B cell (primary cell): ENCODE measurements at regions of chr4 and their contacts with region 1.

Region 1: DNA sequence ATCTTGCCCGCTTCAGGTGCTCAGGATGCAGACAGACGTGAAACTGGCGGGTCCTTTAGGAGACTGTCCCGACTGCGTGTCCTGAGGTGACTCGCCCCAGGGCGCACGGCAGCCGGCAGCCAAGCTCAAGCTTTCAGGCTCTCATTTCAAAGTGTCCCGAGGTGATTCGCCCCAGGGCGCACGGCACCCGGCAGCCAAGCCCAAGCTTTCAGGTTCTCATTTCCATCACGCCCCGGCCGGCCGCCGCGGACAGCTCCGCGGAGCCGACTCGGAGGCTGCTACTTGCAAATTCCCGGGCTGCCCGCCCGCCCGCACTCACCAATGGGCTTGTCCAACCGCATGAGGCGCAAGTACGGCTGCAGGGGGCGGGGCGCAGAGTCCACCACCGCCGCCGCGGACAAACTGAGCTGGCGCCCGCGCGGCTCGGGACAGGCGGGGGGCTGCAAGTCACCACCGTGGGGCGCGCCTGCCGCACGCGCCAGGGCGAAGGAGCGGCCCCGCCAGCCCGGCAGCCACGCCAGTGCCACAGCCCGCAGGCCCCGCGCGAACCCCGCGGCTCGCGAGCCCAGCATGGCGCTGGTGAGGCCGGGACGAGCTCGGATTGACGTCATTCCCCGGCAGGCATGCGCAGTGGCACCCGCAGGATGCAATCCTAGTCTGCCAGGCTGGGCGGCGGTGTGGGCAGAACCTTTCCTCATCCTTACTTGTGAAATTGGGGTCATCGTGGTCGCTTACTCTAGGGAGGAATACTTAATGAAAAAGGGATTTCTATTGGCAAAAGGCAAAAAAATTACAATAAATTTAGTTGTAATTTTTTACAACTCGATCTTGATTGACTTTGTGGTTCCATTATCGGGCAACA is at the start of gene COQ2:
- DNase-seq: peak; percentile 96
- ATAC-seq: peak; percentile 85
- H3K4me3 ChIP-seq: peak within 1 kb of the TSS; percentile 60 to 98 (median 77)
- H3K4me3 Mint-ChIP-seq: peak within 1 kb of the TSS; percentile 99
- H3K27ac ChIP-seq: peak within 1 kb of the TSS; percentile 76 to 95
- H3K27ac Mint-ChIP-seq: peak within 1 kb of the TSS; percentile 99
- H3K4me1 ChIP-seq: peaks cover 18 to 19% of the 10 kb centered on the region in 2 donors
- H3K4me1 Mint-ChIP-seq: peaks cover 38% of the 10 kb centered on the region
- H3K27me3 ChIP-seq: no peaks in the 10 kb centered on the region
- H3K27me3 Mint-ChIP-seq: no peaks in the 10 kb centered on the region
- CTCF ChIP-seq: peak; percentile 34
- total RNA-seq, gene COQ2: 27.9 and 29.4 TPM in 2 replicates

Region 2: DNA sequence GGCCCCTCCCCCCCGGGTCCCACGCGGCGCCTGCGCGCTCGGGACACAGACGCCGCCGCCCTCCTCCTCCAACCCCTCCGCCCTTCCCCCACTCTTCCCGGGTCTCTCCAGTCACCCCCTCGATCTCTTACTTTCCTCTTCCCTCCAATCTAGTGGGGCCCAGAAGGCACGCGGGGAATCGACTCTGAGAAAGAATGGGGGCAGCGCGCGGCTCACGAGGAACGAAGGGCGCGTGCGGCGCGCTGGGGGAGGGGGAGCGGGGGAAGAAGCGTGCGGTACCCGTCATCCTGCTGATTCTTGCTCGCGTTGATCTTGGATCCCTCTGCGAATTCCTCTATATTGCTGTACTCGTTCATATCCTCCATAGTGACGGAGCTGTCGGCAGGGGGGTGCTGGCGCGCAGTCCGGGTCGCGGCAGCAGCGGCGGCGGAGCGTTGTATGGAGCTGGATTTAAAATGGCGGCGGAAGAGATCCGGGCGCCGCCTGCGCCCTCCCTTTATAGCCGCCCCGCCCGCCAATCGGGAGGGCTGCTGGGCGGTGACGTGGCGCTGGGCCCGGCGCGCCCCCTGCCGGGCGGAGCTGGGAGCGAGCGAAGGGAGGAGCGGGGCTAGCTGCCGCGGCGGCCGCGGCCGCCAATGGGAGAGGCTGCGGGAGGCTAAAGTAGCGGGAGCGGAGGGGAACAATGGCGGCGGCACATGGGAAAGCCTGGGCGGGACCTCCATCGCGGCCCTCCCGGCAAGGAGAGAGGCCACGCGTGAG is 855.3 kb before region 1 on chr4:
- CTCF ChIA-PET with region 1: no interaction called
- POLR2A ChIA-PET with region 1: no interaction called
- intact Hi-C with region 1: loop called (anchors 1 kb)
- DNase-seq: peak; percentile 97
- ATAC-seq: peak; percentile 64
- H3K4me3 ChIP-seq: peak overlapping the region; percentile 98 to 99 (median 98)
- H3K4me3 Mint-ChIP-seq: peak overlapping the region; percentile 100
- H3K27ac ChIP-seq: peak overlapping the region; percentile 96 to 100
- H3K27ac Mint-ChIP-seq: peak overlapping the region; percentile 100
- H3K4me1 ChIP-seq: peaks cover 27 to 32% of the 10 kb centered on the region in 2 donors
- H3K4me1 Mint-ChIP-seq: peaks cover 48% of the 10 kb centered on the region
- H3K27me3 ChIP-seq: no peaks in the 10 kb centered on the region
- H3K27me3 Mint-ChIP-seq: no peaks in the 10 kb centered on the region
- CTCF ChIP-seq: peak; percentile 97

Region 3: DNA sequence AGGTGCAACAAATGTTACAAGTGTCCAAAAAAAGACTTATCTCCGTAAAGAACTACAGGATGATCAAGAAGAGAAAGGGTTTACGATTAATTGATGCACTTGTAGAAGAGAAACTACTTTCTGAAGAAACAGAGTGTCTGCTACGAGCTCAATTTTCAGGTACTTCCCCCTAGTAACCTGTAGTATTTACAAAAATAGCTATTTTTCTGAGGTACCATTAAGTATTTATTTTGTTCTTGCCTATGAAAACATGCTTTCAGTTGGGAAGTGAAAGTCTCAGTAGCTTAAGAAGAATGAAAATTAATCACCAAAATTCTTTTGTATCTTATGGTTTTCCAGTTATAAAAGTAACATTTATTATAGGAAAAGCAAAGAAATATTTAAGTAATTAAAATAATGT is 378.0 kb before region 1 on chr4:
- CTCF ChIA-PET with region 1: no interaction called
- POLR2A ChIA-PET with region 1: no interaction called
- intact Hi-C with region 1: no loop called
- DNase-seq: no peak
- ATAC-seq: no peak
- H3K4me3 ChIP-seq: no peak overlapping the region
- H3K4me3 Mint-ChIP-seq: no peak overlapping the region
- H3K27ac ChIP-seq: no peak overlapping the region
- H3K27ac Mint-ChIP-seq: no peak overlapping the region
- H3K4me1 ChIP-seq: peaks cover 3% of the 10 kb centered on the region in 2 donors
- H3K4me1 Mint-ChIP-seq: peaks cover 7% of the 10 kb centered on the region
- H3K27me3 ChIP-seq: no peaks in the 10 kb centered on the region
- H3K27me3 Mint-ChIP-seq: no peaks in the 10 kb centered on the region
- CTCF ChIP-seq: no peak

Region 4: GRCh38 chr4:83012687-83013419 is 271.6 kb before region 1 on chr4:
- CTCF ChIA-PET with region 1: interaction called, 8 read pairs
- POLR2A ChIA-PET with region 1: interaction called, 3 read pairs
- intact Hi-C with region 1: loop called (anchors 1 kb)
- DNase-seq: peak; percentile 99
- ATAC-seq: peak; percentile 89
- H3K4me3 ChIP-seq: peak overlapping the region; percentile 56 to 87 (median 79)
- H3K4me3 Mint-ChIP-seq: peak overlapping the region; percentile 92
- H3K27ac ChIP-seq: peak overlapping the region; percentile 37 to 72
- H3K27ac Mint-ChIP-seq: peak overlapping the region; percentile 91
- H3K4me1 ChIP-seq: peaks cover 24 to 33% of the 10 kb centered on the region in 2 donors
- H3K4me1 Mint-ChIP-seq: peaks cover 43% of the 10 kb centered on the region
- H3K27me3 ChIP-seq: no peaks in the 10 kb centered on the region
- H3K27me3 Mint-ChIP-seq: no peaks in the 10 kb centered on the region
- CTCF ChIP-seq: peak; percentile 59

Region 5: DNA sequence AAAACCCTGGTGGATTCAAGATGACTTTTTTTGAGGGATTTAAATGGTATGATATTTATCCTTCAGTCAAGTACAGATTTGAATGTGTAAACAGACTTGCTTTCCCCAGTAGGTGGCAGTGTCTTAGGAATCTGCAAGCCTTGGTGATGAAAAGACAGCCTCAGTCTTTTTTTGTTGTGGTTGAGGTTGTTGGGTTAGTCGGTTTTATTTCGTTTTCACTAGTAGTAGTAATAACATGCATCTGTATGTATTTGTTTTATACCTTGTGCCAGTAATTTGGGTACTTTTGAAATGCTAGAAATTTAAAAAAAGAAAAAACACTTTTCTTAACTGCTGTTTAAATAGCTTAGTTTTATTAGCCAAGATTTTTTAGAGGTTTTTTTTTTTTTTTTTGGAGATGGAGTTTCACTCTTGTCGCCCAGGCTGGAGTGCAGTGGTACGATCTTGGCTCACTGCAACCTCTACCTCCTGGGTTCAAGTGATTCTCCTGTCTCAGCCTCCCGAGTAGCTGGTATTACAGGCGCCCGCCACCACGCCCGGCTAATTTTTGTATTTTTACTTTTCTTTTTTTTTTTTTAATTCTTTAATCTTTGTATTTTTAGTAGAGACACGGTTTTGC is 210.2 kb before region 1 on chr4:
- CTCF ChIA-PET with region 1: interaction called, 139 read pairs
- POLR2A ChIA-PET with region 1: interaction called, 9 read pairs
- intact Hi-C with region 1: loop called (anchors 1 kb)
- DNase-seq: peak; percentile 85
- ATAC-seq: peak; percentile 85
- H3K4me3 ChIP-seq: no peak overlapping the region
- H3K4me3 Mint-ChIP-seq: peak overlapping the region; percentile 71
- H3K27ac ChIP-seq: no peak overlapping the region
- H3K27ac Mint-ChIP-seq: peak overlapping the region; percentile 57
- H3K4me1 ChIP-seq: peaks cover 16 to 19% of the 10 kb centered on the region in 2 donors
- H3K4me1 Mint-ChIP-seq: peaks cover 20% of the 10 kb centered on the region
- H3K27me3 ChIP-seq: no peaks in the 10 kb centered on the region
- H3K27me3 Mint-ChIP-seq: no peaks in the 10 kb centered on the region
- CTCF ChIP-seq: peak; percentile 78

Region 6: GRCh38 chr4:83217721-83218522 is 66.5 kb before region 1 on chr4:
- CTCF ChIA-PET with region 1: interaction called, 4 read pairs
- POLR2A ChIA-PET with region 1: no interaction called
- intact Hi-C with region 1: loop called (anchors 1 kb)
- DNase-seq: peak; percentile 95
- ATAC-seq: peak; percentile 90
- H3K4me3 ChIP-seq: peak overlapping the region in 3 of 5 experiments; percentile 6 to 37 (median 30)
- H3K4me3 Mint-ChIP-seq: peak overlapping the region; percentile 24
- H3K27ac ChIP-seq: peak overlapping the region; percentile 88 to 94
- H3K27ac Mint-ChIP-seq: peak overlapping the region; percentile 92
- H3K4me1 ChIP-seq: peaks cover 90 to 94% of the 10 kb centered on the region in 2 donors
- H3K4me1 Mint-ChIP-seq: peaks cover 87% of the 10 kb centered on the region
- H3K27me3 ChIP-seq: no peaks in the 10 kb centered on the region
- H3K27me3 Mint-ChIP-seq: no peaks in the 10 kb centered on the region
- CTCF ChIP-seq: no peak

Region 7: GRCh38 chr4:83267121-83267829 is 17.1 kb before region 1 on chr4:
- CTCF ChIA-PET with region 1: interaction called, 96 read pairs
- POLR2A ChIA-PET with region 1: no interaction called
- intact Hi-C with region 1: loop called (anchors 1 kb)
- DNase-seq: no peak
- ATAC-seq: no peak
- H3K4me3 ChIP-seq: no peak overlapping the region
- H3K4me3 Mint-ChIP-seq: no peak overlapping the region
- H3K27ac ChIP-seq: no peak overlapping the region
- H3K27ac Mint-ChIP-seq: no peak overlapping the region
- H3K4me1 ChIP-seq: peaks cover under 1 to 12% of the 10 kb centered on the region in 2 donors
- H3K4me1 Mint-ChIP-seq: peaks cover 18% of the 10 kb centered on the region
- H3K27me3 ChIP-seq: no peaks in the 10 kb centered on the region
- H3K27me3 Mint-ChIP-seq: no peaks in the 10 kb centered on the region
- CTCF ChIP-seq: no peak

Region 8: GRCh38 chr4:83305187-83305586 is 20.8 kb after region 1 on chr4:
- CTCF ChIA-PET with region 1: no interaction called
- POLR2A ChIA-PET with region 1: no interaction called
- intact Hi-C with region 1: no loop called
- DNase-seq: no peak
- ATAC-seq: no peak
- H3K4me3 ChIP-seq: no peak overlapping the region
- H3K4me3 Mint-ChIP-seq: no peak overlapping the region
- H3K27ac ChIP-seq: no peak overlapping the region
- H3K27ac Mint-ChIP-seq: no peak overlapping the region
- H3K4me1 ChIP-seq: no peaks in the 10 kb centered on the region
- H3K4me1 Mint-ChIP-seq: peaks cover 2% of the 10 kb centered on the region
- H3K27me3 ChIP-seq: no peaks in the 10 kb centered on the region
- H3K27me3 Mint-ChIP-seq: no peaks in the 10 kb centered on the region
- CTCF ChIP-seq: no peak

Region 9: GRCh38 chr4:83362492-83363329 is 78.3 kb after region 1 on chr4:
- CTCF ChIA-PET with region 1: no interaction called
- POLR2A ChIA-PET with region 1: no interaction called
- intact Hi-C with region 1: no loop called
- DNase-seq: peak; percentile 28
- ATAC-seq: peak; percentile 31
- H3K4me3 ChIP-seq: no peak overlapping the region
- H3K4me3 Mint-ChIP-seq: no peak overlapping the region
- H3K27ac ChIP-seq: no peak overlapping the region
- H3K27ac Mint-ChIP-seq: no peak overlapping the region
- H3K4me1 ChIP-seq: peaks cover 0 to 4% of the 10 kb centered on the region in 2 donors
- H3K4me1 Mint-ChIP-seq: peaks cover 7% of the 10 kb centered on the region
- H3K27me3 ChIP-seq: no peaks in the 10 kb centered on the region
- H3K27me3 Mint-ChIP-seq: no peaks in the 10 kb centered on the region
- CTCF ChIP-seq: peak; percentile 35

Region 10: GRCh38 chr4:83484500-83485461 is 200.4 kb after region 1 on chr4 and contains the start of gene ABRAXAS1:
- CTCF ChIA-PET with region 1: no interaction called
- POLR2A ChIA-PET with region 1: no interaction called
- intact Hi-C with region 1: loop called (anchors 1 kb)
- DNase-seq: peak; percentile 97
- ATAC-seq: peak; percentile 97
- H3K4me3 ChIP-seq: peak within 1 kb of the TSS; percentile 71 to 87 (median 77)
- H3K4me3 Mint-ChIP-seq: peak within 1 kb of the TSS; percentile 99
- H3K27ac ChIP-seq: peak within 1 kb of the TSS; percentile 60 to 70
- H3K27ac Mint-ChIP-seq: peak within 1 kb of the TSS; percentile 95
- H3K4me1 ChIP-seq: peaks cover 10 to 17% of the 10 kb centered on the region in 2 donors
- H3K4me1 Mint-ChIP-seq: peaks cover 21% of the 10 kb centered on the region
- H3K27me3 ChIP-seq: no peaks in the 10 kb centered on the region
- H3K27me3 Mint-ChIP-seq: no peaks in the 10 kb centered on the region
- CTCF ChIP-seq: no peak
- total RNA-seq, gene ABRAXAS1: 34.4 and 38.4 TPM in 2 replicates

Region 11: GRCh38 chr4:84894610-84895009 is 1610.2 kb after region 1 on chr4:
- CTCF ChIA-PET with region 1: no interaction called
- POLR2A ChIA-PET with region 1: no interaction called
- intact Hi-C with region 1: no loop called
- DNase-seq: no peak
- ATAC-seq: no peak
- H3K4me3 ChIP-seq: no peak overlapping the region
- H3K4me3 Mint-ChIP-seq: no peak overlapping the region
- H3K27ac ChIP-seq: no peak overlapping the region
- H3K27ac Mint-ChIP-seq: no peak overlapping the region
- H3K4me1 ChIP-seq: no peaks in the 10 kb centered on the region
- H3K4me1 Mint-ChIP-seq: no peaks in the 10 kb centered on the region
- H3K27me3 ChIP-seq: no peaks in the 10 kb centered on the region
- H3K27me3 Mint-ChIP-seq: no peaks in the 10 kb centered on the region
- CTCF ChIP-seq: no peak